Heart right ventricle (tissue), 16 donors: ENCODE measurements at regions of chr9 and their contacts with region 1.

Region 1: GRCh38 chr9:1379953-1380352 is 329.8 kb downstream of the DMRT2 start:
- DNase-seq: no peak
- ATAC-seq: no peak
- H3K4me3 ChIP-seq: no peak overlapping the region
- H3K27ac ChIP-seq: no peak overlapping the region
- H3K4me1 ChIP-seq: no peaks in the 10 kb centered on the region
- H3K27me3 ChIP-seq: no peaks in the 10 kb centered on the region
- CTCF ChIP-seq: no peak

Region 2: DNA sequence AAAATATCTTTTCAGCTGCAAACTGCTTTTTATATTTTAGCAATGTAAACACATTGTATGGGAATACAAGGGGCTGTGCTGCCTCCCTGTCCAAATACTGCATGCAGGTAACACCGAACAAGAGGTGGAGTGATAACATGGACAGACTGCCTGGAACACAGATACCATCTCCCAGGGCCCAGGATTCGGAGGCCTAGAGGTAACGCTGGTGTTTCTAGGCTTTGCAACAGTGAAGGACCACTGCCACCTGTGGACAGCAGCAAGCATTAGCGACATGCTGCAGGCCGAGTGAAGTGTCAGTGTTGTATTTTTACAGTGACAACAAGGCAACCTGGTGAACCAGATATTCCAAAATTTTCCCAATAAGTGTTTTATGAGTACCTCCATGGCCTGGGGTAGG is 49.3 kb after region 1 on chr9:
- intact Hi-C with region 1: no loop called
- DNase-seq: peak in 1 of 2 donors; percentile 10
- ATAC-seq: peak in 3 of 8 donors; percentile 37 to 68 (median 61)
- H3K4me3 ChIP-seq: no peak overlapping the region
- H3K27ac ChIP-seq: no peak overlapping the region
- H3K4me1 ChIP-seq: no peaks in the 10 kb centered on the region
- H3K27me3 ChIP-seq: no peaks in the 10 kb centered on the region
- CTCF ChIP-seq: peak in 7 of 9 donors; percentile 39 to 53 (median 42)

Region 3: GRCh38 chr9:2216591-2216990 is 836.6 kb after region 1 on chr9:
- intact Hi-C with region 1: loop called in 1 of 10 experiments (anchors 5 kb)
- DNase-seq: no peak
- ATAC-seq: no peak
- H3K4me3 ChIP-seq: no peak overlapping the region
- H3K27ac ChIP-seq: no peak overlapping the region
- H3K4me1 ChIP-seq: peaks cover 0 to 11% (median 6%) of the 10 kb centered on the region in 9 donors
- H3K27me3 ChIP-seq: no peaks in the 10 kb centered on the region
- CTCF ChIP-seq: no peak